Astrocyte of the cerebellum (primary cell): ENCODE measurements at regions of chr17 and their contacts with region 1.

Region 1: DNA sequence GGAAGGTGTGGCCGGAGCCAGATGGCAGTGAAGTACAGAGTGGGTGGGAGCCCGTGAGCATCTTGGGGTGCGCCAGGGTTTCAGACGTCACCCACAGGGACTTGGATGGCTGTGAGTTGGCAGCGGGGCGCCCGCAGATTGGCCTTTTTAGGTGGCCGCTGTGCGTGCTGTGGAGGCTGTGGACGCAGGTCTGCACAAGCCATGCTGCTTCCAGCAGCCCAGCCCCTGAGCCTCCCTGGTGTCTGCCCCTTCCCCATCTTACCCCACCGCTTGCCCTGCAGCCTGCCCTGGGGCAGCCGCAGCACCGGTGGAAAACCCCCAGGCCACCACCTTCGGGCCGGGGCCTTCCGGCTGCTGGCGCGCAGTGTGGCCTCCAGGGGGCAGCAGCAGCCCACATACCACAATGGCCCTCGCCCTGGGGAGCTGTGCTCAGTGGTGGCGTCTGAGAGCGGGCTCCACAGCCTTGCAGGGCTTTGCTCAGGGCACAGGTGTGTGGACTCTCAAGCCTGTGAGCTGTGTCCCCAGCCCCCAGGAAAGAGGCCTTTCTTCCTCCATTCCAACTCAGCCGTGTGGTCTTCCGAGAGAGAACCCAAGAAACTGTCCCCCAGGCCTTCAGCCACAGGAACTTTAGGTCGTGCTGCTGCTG is 11.8 kb downstream of the ENDOV start:
- DNase-seq: peak; percentile 18
- H3K4me3 ChIP-seq: no peak overlapping the region
- CTCF ChIP-seq: peak; percentile 93

Region 2: GRCh38 chr17:80970044-80970761 is 543.4 kb after region 1 on chr17:
- in situ Hi-C with region 1: loop called (anchors 25 kb)
- DNase-seq: no peak
- H3K4me3 ChIP-seq: no peak overlapping the region
- CTCF ChIP-seq: peak; percentile 55

Region 3: DNA sequence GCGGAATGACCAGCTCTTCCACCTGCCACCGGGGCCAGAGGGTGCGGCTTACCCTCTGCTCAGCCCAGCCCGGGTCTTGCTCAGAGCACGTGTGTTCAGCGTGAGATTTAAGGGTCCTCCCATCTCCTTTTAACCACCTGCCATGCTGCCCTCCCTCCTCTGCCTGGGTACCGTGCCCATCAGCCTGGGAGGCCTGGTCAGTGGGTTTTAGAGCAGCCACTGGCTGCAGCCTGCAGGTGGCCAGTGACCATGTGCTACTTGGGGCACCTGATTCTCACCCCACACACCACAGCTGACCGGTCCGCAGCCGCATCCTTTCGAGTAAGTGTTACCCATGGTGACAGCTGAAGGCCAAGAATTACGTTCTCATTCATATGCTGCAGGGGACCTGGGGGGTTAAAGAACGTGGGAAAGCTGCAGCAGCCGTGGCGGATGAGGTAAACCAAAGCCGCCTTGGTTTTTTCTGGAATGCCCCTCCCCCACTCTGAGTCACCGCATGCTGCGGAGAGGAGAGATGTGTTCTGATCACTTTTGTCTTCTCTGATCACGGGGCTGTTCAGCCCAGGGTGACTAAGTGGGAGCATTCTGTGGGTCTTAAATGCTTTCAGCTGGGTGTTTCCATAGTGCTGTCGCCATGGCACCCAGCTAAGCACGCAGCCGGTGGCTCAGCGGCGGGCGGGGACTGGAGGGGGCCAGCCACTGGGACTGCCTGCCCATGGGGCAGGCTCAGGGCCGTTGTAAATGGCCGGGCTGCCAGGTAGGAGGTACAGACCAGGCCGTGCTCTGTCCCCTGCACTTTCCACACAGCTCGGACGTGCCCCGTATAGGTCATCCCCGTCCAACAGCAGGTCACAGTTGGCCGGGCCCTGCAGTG is 667.9 kb after region 1 on chr17:
- in situ Hi-C with region 1: loop called (anchors 25 kb)
- DNase-seq: peak; percentile 99
- H3K4me3 ChIP-seq: no peak overlapping the region
- CTCF ChIP-seq: no peak